ENCODE measurements at regions of chr4 and their contacts with region 1.

Region 1: GRCh38 chr4:82865592-82865991 is 25.4 kb downstream of the SEC31A start:
- H3K4me3 Mint-ChIP-seq: no peak overlapping the region
- H3K27ac Mint-ChIP-seq: peak overlapping the region; percentile 86
- H3K4me1 Mint-ChIP-seq: peaks cover 28% of the 10 kb centered on the region
- H3K27me3 Mint-ChIP-seq: no peaks in the 10 kb centered on the region

Region 2: GRCh38 chr4:82833696-82834313 is 31.8 kb before region 1 on chr4:
- intact Hi-C with region 1: no loop called
- H3K4me3 Mint-ChIP-seq: no peak overlapping the region
- H3K27ac Mint-ChIP-seq: no peak overlapping the region
- H3K4me1 Mint-ChIP-seq: no peaks in the 10 kb centered on the region
- H3K27me3 Mint-ChIP-seq: no peaks in the 10 kb centered on the region

Region 3: DNA sequence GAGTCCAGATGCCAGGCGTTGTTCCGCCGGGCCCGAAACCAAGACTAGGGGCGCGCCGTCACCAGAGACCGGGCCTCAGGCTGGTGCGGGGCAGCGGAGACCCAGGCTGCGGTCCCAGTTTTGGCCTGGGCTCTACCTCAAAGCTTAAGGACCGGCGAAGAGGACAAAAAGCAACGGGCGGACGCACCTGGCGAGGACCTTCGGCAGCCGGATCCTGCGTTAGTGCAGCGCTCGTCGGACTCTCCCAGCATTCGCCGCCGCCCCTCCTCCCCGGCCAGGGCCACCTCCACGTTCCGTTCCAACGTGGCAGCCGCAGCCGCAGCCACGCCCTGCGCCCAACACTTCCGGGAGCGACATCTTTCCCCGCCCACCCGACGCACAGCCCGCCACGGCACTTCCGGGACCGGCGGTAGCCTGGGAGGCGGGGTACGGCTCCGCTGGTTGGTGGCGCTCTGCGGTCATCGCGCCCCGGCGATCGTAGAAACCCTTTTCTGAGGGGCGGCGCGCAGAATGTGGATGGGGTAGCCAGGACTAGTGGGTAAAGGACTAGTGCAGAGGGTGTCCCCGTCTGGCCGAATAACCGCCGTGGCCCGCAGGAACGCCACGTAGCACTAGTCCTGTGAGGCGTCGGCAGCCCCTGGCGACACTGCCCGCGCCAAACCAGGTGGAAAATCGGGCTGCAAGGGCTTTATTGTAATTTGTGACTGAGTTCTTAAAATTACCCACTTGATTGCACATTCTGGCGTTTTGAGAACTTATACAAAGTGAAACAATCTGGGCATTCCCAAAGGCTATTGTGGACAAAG is 25.5 kb after region 1 on chr4 and contains the start of gene SEC31A:
- intact Hi-C with region 1: loop called (anchors 1 kb)
- H3K4me3 Mint-ChIP-seq: peak within 1 kb of the TSS; percentile 87
- H3K27ac Mint-ChIP-seq: peak within 1 kb of the TSS; percentile 97
- H3K4me1 Mint-ChIP-seq: peaks cover 19% of the 10 kb centered on the region
- H3K27me3 Mint-ChIP-seq: no peaks in the 10 kb centered on the region